ENCODE measurements at regions of chr15 and their contacts with region 1.

Region 1: DNA sequence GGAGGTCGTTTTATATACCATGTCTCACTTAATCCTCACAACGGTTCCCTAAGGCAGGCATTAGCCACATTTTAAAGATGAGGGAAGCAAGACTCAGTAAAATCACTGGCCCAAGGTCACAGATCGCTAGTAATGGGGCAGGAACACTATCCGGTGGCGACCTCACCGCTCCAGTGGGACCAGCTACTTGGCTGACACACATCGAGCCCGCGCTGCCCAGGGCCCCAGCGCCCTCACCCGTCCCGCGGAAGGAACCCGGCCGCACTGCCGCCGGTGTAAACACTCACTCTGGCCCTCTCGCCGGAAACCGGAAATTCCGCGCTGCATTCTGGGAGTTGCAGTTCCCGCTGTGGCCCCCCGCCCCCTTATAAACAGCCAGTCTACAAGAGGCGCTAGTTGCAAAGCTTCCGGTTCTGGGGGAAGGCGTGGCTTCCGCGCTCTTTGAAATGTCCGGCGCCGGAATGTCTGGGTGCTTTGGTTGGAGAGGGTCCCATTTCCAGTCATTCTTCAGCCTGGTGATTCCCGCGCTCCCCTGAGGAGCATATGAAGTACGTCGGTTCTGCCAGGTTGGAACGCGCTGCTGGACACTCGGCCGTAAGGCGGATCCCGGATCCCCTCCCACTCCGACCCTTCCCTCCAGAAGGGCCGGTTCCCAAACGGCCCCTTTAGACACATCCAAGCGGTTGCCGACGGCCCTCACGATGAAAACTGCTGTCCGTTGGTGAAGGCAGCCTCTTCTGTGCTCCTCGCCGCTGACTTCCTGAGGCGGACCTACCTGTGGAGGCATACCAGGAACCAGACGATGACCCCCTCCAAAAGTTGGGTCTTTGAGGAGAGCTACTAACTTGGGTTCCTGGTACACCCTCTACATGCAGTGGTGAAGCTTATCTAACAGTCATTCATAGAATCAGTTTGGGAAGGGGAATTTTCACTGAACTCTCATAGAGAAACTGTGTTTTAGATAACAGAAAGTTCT is at the start of gene UBL7:
- DNase-seq: peak; percentile 98
- ATAC-seq: peak; percentile 100
- total RNA-seq, gene UBL7: 47.7 TPM

Region 2: DNA sequence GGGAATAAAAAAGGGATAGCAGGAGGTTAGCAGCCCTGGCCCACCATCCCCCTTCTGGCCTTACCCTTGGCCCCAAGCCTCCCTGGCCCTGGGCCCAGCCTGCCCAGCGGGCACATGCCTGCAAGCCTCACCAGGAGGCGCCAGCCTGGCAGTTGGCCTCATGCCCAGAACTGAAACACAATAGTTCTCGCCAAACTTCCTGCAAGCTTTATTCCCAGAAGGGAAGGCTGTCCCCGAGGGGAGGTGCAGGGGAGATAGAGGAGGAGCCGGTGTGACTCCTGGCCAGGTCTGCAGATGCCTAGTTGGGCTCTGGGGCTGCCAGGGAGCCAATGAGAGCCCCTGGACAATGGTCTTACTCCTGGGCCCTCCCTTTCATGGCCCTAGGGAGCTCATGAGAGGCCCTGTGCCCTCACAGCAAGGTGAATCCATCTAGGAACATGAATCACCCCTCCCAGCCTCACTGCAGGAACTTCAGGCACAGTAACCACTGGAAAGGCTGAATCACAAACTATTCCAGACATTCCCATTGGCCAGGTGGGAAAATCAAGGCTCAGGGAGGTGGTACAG is 221.1 kb before region 1 on chr15:
- intact Hi-C with region 1: no loop called
- DNase-seq: peak; percentile 89
- ATAC-seq: peak; percentile 83

Region 3: DNA sequence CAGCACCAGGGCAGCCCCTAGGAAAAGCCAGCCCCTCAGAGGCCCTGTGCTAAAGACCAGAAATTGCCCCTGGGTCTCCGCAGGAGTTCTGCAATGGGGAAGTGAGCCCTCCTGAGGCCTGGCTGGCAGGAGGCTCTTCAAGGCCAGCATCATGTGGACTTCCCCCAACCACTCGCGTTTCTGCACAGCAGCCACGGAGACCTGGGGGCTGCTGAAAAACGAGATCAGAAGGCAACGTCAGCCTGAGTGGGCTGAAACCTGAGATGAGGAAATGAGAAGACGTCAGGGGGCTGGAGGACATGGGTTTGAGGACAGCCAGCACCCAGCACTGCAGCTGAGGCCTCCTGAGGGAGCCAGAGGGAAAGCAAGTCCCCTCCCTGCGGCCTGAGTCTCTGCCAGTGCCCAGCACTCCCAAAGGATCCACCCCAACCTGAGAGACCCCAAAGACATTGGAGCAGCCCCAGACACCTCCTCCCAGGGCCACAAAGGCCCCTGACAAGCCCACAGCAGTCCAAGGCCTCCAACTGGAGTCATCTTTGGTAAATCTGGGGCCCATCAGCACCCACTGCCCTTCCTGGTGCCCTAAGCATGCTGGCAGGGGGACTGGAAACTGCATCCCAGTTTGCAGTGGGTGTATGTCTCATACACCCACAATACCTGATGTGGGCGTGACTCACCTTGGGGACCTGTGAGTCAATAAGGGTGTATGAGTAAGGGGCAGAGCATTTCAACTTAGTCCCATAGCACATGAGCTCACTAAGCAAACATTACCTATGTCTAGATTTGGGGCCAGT is 64.5 kb before region 1 on chr15:
- intact Hi-C with region 1: no loop called
- DNase-seq: peak; percentile 63
- ATAC-seq: no peak

Region 4: GRCh38 chr15:74540761-74541493 is 79.8 kb after region 1 on chr15 and contains the start of gene ARID3B:
- intact Hi-C with region 1: loop called (anchors 2 kb)
- DNase-seq: peak; percentile 98
- ATAC-seq: peak; percentile 99
- total RNA-seq, gene ARID3B: 1.4 TPM

Measured in Right ventricle myocardium inferior (tissue), 1 donor.